Pancreas (tissue), 10 donors: ENCODE measurements at regions of chr2 and their contacts with region 1.

Region 1: DNA sequence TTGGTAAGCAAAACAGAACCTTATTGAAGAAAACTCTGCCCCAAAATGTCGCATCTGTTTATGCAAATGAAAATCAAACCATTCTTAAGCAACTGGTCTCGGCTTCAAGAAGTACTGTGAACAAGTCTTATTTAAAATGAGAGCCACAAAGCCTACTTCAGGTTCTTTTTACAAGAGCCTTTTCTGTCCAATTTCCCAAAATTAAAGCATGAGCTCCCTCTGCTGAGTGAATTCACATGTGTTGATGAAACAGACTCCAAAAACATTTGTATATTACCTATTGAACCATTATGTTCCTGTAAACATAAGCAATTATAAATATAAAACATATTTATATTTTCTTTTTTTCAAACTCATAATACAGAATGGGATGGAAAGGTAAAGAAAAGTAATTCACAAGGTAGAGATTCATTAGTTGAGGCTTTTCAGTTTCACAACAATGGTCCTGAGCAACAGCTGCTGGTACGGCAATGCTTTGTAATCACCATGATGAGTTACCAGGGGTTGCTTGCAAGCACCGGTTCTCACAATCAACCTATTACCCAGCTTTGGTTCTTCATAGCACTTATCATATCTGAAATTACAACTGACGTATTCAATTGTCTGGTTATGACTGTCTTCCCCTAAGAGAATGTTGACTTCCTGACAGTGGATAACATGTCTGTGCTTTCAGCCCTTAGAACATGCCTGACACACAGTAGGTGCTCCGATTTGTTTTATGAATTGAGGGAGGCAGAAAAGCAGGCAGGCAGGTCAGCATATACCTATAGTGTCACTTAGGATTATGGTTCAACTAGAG is 108.4 kb upstream of the BZW1 start:
- DNase-seq: peak in 3 of 6 donors; percentile 25 to 47 (median 47)
- ATAC-seq: peak; percentile 58 to 89 (median 87)
- H3K4me3 ChIP-seq: no peak overlapping the region
- H3K27ac ChIP-seq: no peak overlapping the region
- H3K4me1 ChIP-seq: no peaks in the 10 kb centered on the region
- H3K27me3 ChIP-seq: no peaks in the 10 kb centered on the region
- CTCF ChIP-seq: peak in 3 of 4 donors; percentile 27 to 40 (median 28)

Region 2: GRCh38 chr2:199979832-199980628 is 723.3 kb before region 1 on chr2:
- intact Hi-C with region 1: loop called in 1 of 3 experiments (anchors 10 kb)
- DNase-seq: peak; percentile 61 to 98 (median 82)
- ATAC-seq: peak; percentile 80 to 88 (median 88)
- H3K4me3 ChIP-seq: peak overlapping the region in 1 of 4 donors; percentile 9
- H3K27ac ChIP-seq: no peak overlapping the region
- H3K4me1 ChIP-seq: peaks cover 0 to 12% (median 4%) of the 10 kb centered on the region in 3 donors
- H3K27me3 ChIP-seq: no peaks in the 10 kb centered on the region
- CTCF ChIP-seq: peak; percentile 58 to 79 (median 76)

Region 3: GRCh38 chr2:200578778-200579177 is 124.5 kb before region 1 on chr2:
- intact Hi-C with region 1: loop called in 2 of 3 experiments (anchors 5 to 10 kb)
- DNase-seq: no peak
- ATAC-seq: peak; percentile 78 to 97 (median 94)
- H3K4me3 ChIP-seq: no peak overlapping the region
- H3K27ac ChIP-seq: no peak overlapping the region
- H3K4me1 ChIP-seq: no peaks in the 10 kb centered on the region
- H3K27me3 ChIP-seq: no peaks in the 10 kb centered on the region
- CTCF ChIP-seq: peak; percentile 25 to 60 (median 40)